Endothelial cell of umbilical vein (primary cell): ENCODE measurements at regions of chr5 and their contacts with region 1.

Region 1: GRCh38 chr5:130720355-130720754 is 444.7 kb downstream of the HINT1 start:
- DNase-seq: peak; percentile 67
- H3K4me3 ChIP-seq: no peak overlapping the region
- H3K27ac ChIP-seq: no peak overlapping the region
- H3K4me1 ChIP-seq: no peaks in the 10 kb centered on the region
- H3K27me3 ChIP-seq: peaks cover 0 to 1% of the 10 kb centered on the region in 2 experiments
- CTCF ChIP-seq: peak; percentile 9 to 54
- POLR2A ChIP-seq: no peak

Region 2: GRCh38 chr5:130198925-130199324 is 521.4 kb before region 1 on chr5:
- CTCF ChIA-PET with region 1: interaction called, 6 read pairs
- POLR2A ChIA-PET with region 1: no interaction called
- dilution Hi-C with region 1: no loop called
- intact Hi-C with region 1: loop called (anchors 1 kb)
- DNase-seq: peak; percentile 27
- H3K4me3 ChIP-seq: no peak overlapping the region
- H3K27ac ChIP-seq: no peak overlapping the region
- H3K4me1 ChIP-seq: no peaks in the 10 kb centered on the region
- H3K27me3 ChIP-seq: no peaks in the 10 kb centered on the region
- CTCF ChIP-seq: no peak
- POLR2A ChIP-seq: no peak

Region 3: DNA sequence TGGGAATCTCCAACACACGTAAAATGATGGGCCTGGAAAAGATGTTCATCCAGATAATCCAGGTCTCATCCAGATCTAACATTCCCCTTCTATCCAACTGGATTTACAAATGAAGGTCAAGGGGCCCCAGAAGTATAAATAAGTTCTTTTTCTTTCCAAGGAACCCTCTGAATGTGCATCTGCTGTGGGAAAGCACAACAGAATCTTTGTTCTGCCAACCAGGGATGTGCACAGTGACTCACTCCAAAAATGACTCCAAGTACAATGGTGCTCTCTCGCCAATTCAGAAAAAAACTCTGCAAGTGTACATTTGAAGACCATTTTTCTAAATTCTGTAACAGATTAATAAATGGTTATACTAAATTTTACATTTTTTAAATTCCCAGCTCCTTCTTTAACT is 902.3 kb after region 1 on chr5:
- CTCF ChIA-PET with region 1: no interaction called
- POLR2A ChIA-PET with region 1: no interaction called
- dilution Hi-C with region 1: no loop called
- intact Hi-C with region 1: no loop called
- DNase-seq: no peak
- H3K4me3 ChIP-seq: no peak overlapping the region
- H3K27ac ChIP-seq: no peak overlapping the region
- H3K4me1 ChIP-seq: no peaks in the 10 kb centered on the region
- H3K27me3 ChIP-seq: no peaks in the 10 kb centered on the region
- CTCF ChIP-seq: no peak
- POLR2A ChIP-seq: no peak